Heart right ventricle (tissue), 16 donors: ENCODE measurements at regions of chr17 and their contacts with region 1.

Region 1: DNA sequence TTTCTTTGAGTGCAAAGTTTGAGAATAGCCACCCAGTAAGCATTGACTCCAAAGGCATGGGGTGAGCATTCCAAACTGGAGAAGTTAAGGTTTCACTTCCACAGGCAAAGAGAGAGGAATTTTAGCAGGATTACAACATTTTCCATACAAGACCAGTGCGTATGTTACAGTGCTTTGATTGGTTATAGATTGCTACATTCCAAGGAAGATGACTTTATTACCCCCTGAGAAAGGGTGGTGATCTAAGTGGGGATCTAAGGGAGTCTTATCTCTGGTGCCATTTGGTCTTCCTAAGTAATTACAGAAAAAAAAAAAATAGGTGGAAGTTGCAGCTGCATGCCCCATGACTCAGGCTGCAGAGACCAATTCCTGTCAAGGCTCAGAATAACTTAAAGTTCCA is 11.3 kb downstream of the SLC46A1 start:
- DNase-seq: no peak
- ATAC-seq: no peak
- H3K4me3 ChIP-seq: no peak overlapping the region
- H3K27ac ChIP-seq: no peak overlapping the region
- H3K4me1 ChIP-seq: peaks cover 0 to 26% (median 6%) of the 10 kb centered on the region in 9 donors
- H3K27me3 ChIP-seq: no peaks in the 10 kb centered on the region
- CTCF ChIP-seq: no peak

Region 2: DNA sequence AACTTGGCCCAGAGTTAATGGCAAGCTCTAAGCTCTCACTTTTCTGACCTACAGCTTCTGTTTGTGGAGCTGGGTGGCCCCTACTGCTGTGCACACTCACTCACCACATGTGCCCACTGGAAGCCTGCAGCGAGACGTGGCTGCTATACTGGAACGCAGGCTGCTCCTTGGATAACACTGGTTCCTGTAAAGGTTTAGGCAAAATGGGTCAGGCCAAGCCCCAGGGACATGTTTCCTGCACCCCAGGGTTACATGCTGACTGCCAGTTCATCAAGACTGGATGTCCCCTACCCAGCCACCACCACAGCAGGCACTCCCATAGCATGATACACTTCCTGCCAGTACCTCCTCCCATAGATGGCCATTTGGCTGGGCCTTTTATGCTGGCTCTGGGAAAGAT is 45.7 kb before region 1 on chr17:
- intact Hi-C with region 1: loop called in 1 of 10 experiments (anchors 1 kb)
- DNase-seq: no peak
- ATAC-seq: no peak
- H3K4me3 ChIP-seq: no peak overlapping the region
- H3K27ac ChIP-seq: peak overlapping the region in 1 of 10 donors; percentile 21
- H3K4me1 ChIP-seq: peaks cover 15 to 56% (median 34%) of the 10 kb centered on the region in 9 donors
- H3K27me3 ChIP-seq: no peaks in the 10 kb centered on the region
- CTCF ChIP-seq: no peak